ENCODE measurements at regions of chr19 and their contacts with region 1.

Region 1: GRCh38 chr19:33406521-33407139 is 33.1 kb downstream of the CEBPG start:
- DNase-seq: peak; percentile 87
- H3K4me3 Mint-ChIP-seq: no peak overlapping the region
- H3K27ac Mint-ChIP-seq: no peak overlapping the region
- H3K4me1 Mint-ChIP-seq: no peaks in the 10 kb centered on the region
- H3K27me3 Mint-ChIP-seq: no peaks in the 10 kb centered on the region
- CTCF ChIP-seq: peak; percentile 97

Region 2: GRCh38 chr19:33143897-33144405 is 262.7 kb before region 1 on chr19:
- CTCF ChIA-PET with region 1: interaction called, 3 read pairs
- intact Hi-C with region 1: loop called (anchors 10 kb)
- DNase-seq: peak; percentile 71
- H3K4me3 Mint-ChIP-seq: peak overlapping the region; percentile 4
- H3K27ac Mint-ChIP-seq: no peak overlapping the region
- H3K4me1 Mint-ChIP-seq: peaks cover 7% of the 10 kb centered on the region
- H3K27me3 Mint-ChIP-seq: peaks cover 48% of the 10 kb centered on the region
- CTCF ChIP-seq: peak; percentile 96

Region 3: GRCh38 chr19:33241530-33242101 is 165.0 kb before region 1 on chr19:
- CTCF ChIA-PET with region 1: interaction called, 13 read pairs
- intact Hi-C with region 1: loop called (anchors 2 kb)
- DNase-seq: peak; percentile 41
- H3K4me3 Mint-ChIP-seq: no peak overlapping the region
- H3K27ac Mint-ChIP-seq: no peak overlapping the region
- H3K4me1 Mint-ChIP-seq: no peaks in the 10 kb centered on the region
- H3K27me3 Mint-ChIP-seq: peaks cover 55% of the 10 kb centered on the region
- CTCF ChIP-seq: peak; percentile 83

Region 4: GRCh38 chr19:33311326-33311682 is 95.3 kb before region 1 on chr19:
- CTCF ChIA-PET with region 1: interaction called, 3 read pairs
- intact Hi-C with region 1: loop called (anchors 10 kb)
- DNase-seq: peak; percentile 76
- H3K4me3 Mint-ChIP-seq: no peak overlapping the region
- H3K27ac Mint-ChIP-seq: no peak overlapping the region
- H3K4me1 Mint-ChIP-seq: peaks cover 10% of the 10 kb centered on the region
- H3K27me3 Mint-ChIP-seq: peaks cover 57% of the 10 kb centered on the region
- CTCF ChIP-seq: peak; percentile 65

Measured in Calu3 (cell line).